Adrenal gland (tissue), 19 donors: ENCODE measurements at regions of chr16 and their contacts with region 1.

Region 1: DNA sequence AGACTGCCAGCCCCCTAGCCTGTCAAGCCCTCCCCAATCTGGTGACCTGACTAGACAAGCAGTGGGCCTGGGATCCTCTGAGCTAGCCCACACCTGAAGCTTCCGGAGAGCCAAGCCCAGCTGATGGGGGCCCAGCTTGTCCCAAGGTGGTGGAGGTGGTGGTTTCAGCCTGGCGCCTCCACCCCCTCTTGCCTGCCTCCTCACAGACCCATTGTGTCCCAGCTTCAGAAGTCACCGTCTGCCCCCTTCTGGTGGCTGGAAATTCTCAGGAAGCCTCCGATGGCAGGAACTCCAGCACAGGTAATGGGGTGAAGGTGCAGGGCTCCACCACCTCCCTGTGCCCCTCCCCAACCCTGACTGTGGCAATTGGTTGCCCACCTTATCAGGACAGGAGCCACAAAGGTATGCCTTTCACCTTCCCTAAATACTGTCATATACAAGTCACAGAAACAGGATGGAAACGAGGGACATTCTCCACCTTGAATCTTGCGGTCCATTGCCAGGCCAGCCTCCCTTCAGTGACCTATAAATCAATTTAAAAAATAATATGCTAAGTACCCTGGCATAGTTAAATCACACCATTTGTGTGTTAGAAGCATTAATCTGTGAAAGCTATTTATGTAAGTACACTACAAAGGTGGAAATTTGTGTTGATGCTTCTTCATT is 66.0 kb upstream of the ZNF423 start:
- DNase-seq: peak; percentile 41 to 82 (median 63)
- H3K4me3 ChIP-seq: no peak overlapping the region
- H3K27ac ChIP-seq: no peak overlapping the region
- H3K4me1 ChIP-seq: no peaks in the 10 kb centered on the region
- H3K27me3 ChIP-seq: no peaks in the 10 kb centered on the region
- CTCF ChIP-seq: peak; percentile 34 to 75 (median 56)
- POLR2A ChIP-seq: no peak

Region 2: GRCh38 chr16:49407873-49408550 is 513.9 kb before region 1 on chr16:
- intact Hi-C with region 1: loop called in 1 of 2 experiments (anchors 5 kb)
- DNase-seq: peak; percentile 82 to 92 (median 88)
- H3K4me3 ChIP-seq: no peak overlapping the region
- H3K27ac ChIP-seq: no peak overlapping the region
- H3K4me1 ChIP-seq: no peaks in the 10 kb centered on the region
- H3K27me3 ChIP-seq: no peaks in the 10 kb centered on the region
- CTCF ChIP-seq: peak; percentile 85 to 96 (median 93)
- POLR2A ChIP-seq: no peak

Region 3: GRCh38 chr16:49513040-49513439 is 408.9 kb before region 1 on chr16:
- intact Hi-C with region 1: loop called in 1 of 2 experiments (anchors 10 kb)
- DNase-seq: peak in 1 of 7 donors; percentile 58
- H3K4me3 ChIP-seq: no peak overlapping the region
- H3K27ac ChIP-seq: no peak overlapping the region
- H3K4me1 ChIP-seq: no peaks in the 10 kb centered on the region
- H3K27me3 ChIP-seq: no peaks in the 10 kb centered on the region
- CTCF ChIP-seq: peak in 1 of 6 experiments; percentile 17
- POLR2A ChIP-seq: no peak